Activated CD4-positive, alpha-beta T cell treated with anti-CD3 and anti-CD28 coated beads, Interleukin-2, amount 10 ng/mL, durations not matched to agents 24 days and 14 days (primary cell): ENCODE measurements at regions of chr6 and their contacts with region 1.

Region 1: GRCh38 chr6:32127717-32128592 is at the start of gene ATF6B:
- DNase-seq: peak; percentile 98
- H3K4me3 Mint-ChIP-seq: peak within 1 kb of the TSS; percentile 100
- H3K27ac Mint-ChIP-seq: peak within 1 kb of the TSS; percentile 96
- H3K4me1 Mint-ChIP-seq: peaks cover 39% of the 10 kb centered on the region
- H3K27me3 Mint-ChIP-seq: peaks cover 2% of the 10 kb centered on the region
- total RNA-seq, gene ATF6B: 72.9 and 81.0 TPM in 2 replicates

Region 2: DNA sequence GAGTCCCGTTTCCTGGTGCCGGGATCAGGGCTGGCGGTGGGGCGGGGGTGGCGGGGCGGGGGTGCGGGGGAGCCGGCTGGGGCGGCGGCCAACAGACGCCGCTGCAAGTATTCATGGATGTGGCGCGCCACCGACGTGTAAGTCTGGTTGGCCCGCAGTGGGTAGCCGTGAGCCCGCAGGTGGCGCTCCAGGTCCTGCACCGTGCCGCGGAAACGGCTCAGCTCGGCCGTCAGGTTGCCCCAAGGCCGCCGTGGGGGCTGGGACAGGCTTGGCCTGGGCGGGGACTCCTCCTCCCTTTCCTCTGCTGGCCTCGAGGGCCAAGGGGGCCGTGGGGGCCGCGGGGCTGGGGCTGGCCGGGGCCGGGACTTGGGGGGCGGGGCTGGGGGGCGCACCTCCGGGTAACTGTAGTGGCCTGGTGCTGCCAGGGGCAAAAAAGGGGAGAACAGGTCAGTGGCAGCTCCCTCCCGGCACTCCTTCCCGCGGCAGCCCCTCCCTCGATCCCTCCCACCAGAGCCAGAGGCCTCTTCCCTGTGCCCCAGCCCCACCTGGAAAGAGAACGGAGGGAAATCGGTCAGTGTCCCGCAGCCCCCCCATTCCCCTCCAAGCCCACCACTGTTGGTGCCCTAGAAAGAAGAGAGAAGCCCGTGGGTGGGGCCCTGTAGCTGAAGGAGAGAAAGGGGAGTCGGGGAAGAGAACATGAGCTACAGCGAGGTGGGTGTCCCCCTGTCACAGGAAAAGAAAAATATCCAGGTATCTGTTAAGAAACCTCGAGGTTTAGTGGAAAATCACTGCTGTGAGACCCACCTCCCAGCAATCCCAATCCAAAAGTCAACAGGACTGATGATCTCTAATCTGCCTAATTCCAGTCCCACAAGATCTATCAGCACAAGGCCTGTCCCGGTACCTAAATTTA is 40.1 kb before region 1 on chr6:
- intact Hi-C with region 1: loop called (anchors 1 kb)
- DNase-seq: peak; percentile 90
- H3K4me3 Mint-ChIP-seq: no peak overlapping the region
- H3K27ac Mint-ChIP-seq: no peak overlapping the region
- H3K4me1 Mint-ChIP-seq: peaks cover 15% of the 10 kb centered on the region
- H3K27me3 Mint-ChIP-seq: peaks cover 74% of the 10 kb centered on the region

Region 3: DNA sequence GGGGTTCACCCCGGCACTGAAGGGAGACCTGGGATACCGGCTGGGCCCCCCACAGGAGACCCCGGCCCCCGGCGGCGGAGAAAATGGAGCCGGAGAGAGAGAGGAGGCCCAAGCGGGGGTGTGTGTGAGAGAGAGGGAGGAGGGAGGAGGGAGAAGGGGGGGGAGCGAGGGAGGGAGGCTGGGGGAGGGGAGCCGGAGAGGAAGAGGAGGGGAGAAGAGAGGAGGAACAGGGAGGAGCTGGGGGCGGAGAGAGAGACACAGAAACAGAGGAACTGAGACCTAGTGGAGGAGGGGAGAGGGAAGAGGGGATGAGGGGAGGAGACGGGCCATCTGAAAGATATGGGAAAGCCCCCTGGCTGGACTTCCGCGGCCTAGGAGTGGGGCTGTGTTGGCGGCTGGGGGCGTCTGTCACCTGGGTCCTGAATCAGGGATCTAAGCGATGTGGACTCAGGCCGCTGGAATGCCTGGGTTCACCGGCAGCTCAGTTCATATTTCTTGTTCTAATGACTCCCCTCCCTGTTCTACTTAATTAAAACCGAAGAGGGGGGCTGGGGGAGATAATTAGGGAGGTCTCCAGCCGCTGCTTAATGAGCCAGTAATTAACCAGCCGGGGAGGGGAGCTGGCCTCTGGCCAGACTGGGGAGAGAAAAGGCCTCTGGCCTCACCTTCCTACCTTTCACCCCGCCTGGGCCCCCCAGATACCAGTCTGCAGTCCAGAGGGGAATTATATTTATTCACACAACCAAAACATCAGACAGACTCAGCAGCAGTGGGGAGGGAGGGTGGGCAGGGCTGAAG is 62.3 kb after region 1 on chr6 and contains the start of gene PBX2:
- intact Hi-C with region 1: loop called (anchors 1 kb)
- DNase-seq: peak; percentile 94
- H3K4me3 Mint-ChIP-seq: peak within 1 kb of the TSS; percentile 97
- H3K27ac Mint-ChIP-seq: peak within 1 kb of the TSS; percentile 95
- H3K4me1 Mint-ChIP-seq: peaks cover 67% of the 10 kb centered on the region
- H3K27me3 Mint-ChIP-seq: no peaks in the 10 kb centered on the region
- total RNA-seq, gene PBX2: 88.1 and 92.7 TPM in 2 replicates

Region 4: DNA sequence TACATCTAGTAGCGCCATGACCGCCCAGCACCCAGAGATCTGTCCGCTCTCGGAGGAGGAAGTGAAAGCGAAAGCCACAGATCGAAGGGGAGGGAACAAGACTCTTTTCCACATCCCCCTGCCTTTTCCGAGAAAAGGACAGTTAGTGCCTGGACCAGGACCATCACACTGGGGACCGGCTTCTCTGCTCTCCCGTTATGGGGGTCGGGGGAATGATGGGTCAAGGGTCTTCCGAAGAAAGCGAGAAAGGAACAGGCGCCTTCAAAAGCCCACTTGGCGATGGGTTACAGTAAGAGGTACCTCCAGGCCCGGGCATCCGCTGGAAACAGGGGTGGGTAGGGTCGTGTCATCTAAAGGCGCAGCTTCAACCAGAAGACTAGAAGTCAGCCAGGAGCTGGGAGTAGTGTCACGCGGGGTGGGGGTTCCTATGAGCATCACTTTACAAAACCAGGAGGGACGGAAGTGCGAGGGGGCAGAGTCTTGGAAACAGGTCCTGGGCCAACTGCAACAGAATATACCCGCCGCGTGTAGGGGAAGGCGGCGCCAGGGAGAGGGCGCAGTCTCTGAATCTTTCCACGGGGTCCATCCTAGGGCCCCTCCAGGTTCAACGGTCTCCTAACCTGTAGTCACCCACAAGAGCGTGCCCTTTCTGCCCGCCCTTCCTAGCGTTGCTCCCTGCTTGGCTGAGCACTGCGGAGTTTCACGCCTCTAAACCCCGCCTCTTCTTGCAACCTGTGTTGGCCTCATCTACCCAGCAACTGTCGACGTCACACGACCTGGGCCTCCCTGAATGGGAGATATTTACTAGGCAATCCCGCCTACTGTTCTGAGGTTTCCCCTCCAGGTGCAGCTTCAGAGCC is 716.3 kb after region 1 on chr6 and contains the start of gene PSMB8:
- intact Hi-C with region 1: loop called (anchors 5 kb)
- DNase-seq: peak; percentile 99
- H3K4me3 Mint-ChIP-seq: peak within 1 kb of the TSS; percentile 99
- H3K27ac Mint-ChIP-seq: peak within 1 kb of the TSS; percentile 99
- H3K4me1 Mint-ChIP-seq: peaks cover 73% of the 10 kb centered on the region
- H3K27me3 Mint-ChIP-seq: no peaks in the 10 kb centered on the region
- total RNA-seq, gene PSMB8: 342 and 353 TPM in 2 replicates